ENCODE measurements at regions of chr1 and their contacts with region 1.

Region 1: DNA sequence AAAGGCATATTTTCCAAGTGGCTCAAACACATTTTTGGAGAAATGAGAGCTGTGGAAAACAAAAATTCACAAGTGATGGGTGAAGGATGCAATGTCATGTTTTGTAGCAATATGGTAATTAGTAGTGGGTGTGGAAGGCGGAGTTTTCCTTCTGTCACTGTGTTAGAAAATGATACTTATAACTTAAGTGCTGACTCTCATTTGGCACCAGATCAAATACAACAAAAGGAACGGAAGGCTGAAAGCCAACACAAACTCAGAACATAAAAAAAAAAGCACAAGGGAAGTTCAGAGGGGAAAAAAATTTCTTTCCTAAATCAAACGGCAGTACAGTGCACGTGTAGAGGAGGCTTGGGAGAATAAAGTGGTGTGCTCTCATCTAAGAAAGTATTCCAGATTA is at the start of gene TNFSF18:
- DNase-seq: no peak
- ATAC-seq: peak; percentile 57
- total RNA-seq, gene TNFSF18: not detected

Region 2: GRCh38 chr1:172938676-172939075 is 112.2 kb before region 1 on chr1:
- intact Hi-C with region 1: loop called (anchors 10 kb)
- DNase-seq: no peak
- ATAC-seq: no peak

Measured in Right ventricle myocardium inferior (tissue), 1 donor.